ENCODE measurements at regions of chr17 and their contacts with region 1.

Region 1: GRCh38 chr17:44241106-44241624 is 21.7 kb upstream of the UBTF start:
- DNase-seq: no peak
- ATAC-seq: no peak

Region 2: DNA sequence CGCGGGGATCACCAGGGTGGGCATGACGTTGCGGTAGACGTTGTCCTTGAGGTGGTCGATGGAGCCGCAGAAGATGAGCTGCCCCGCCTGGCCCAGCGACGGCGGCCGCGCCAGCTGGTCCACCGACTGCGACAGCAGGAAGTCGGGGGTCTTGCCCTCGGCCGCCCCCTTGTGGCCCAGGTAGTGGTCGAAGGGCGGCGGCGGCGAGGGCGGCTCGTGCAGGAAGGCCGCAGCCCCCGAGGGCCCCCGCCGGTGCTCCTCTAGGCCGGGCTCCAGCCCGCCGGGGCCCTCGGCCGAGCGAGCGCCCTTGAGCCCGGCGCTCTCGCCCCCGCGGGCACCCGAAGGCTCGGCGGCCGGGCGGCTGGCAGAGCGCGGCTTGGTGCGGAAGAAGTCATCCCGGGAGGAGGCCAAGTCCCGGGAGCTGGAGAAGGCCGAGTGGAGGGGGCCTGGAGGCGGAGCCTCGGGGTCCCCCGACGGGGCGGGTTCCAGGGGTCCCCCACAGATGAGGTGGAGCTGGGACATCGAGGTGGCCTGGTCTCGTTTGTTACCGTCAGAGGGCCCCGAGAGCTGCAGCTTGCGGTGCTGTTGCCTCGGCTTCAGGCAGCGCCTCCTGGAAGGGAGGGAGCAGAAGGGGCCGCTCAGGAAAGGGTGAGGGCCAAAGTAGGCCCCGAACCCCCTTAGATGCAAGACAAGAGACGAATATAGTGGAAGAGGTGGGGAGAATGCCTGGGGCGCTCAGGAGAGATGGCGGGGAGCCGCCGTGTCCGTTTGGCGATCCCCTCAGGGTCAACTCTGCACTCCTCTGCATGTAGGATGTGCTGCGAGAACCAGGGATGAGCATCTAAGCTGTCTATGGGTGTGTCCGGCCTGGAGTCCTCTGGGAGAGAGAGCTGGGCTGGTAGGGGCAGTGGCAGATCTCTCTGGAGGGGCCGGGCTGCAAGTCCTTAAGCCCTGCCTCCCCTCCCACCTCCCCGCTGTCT is 113.7 kb after region 1 on chr17:
- intact Hi-C with region 1: no loop called
- DNase-seq: no peak
- ATAC-seq: no peak

Region 3: GRCh38 chr17:45067637-45068036 is 826.5 kb after region 1 on chr17:
- intact Hi-C with region 1: loop called (anchors 5 kb)
- DNase-seq: no peak
- ATAC-seq: no peak

Measured in sciatic nerve (tissue), 2 donors.